ENCODE measurements at regions of chr2 and their contacts with region 1.

Region 1: GRCh38 chr2:143110758-143111428 is 18.3 kb upstream of the ARHGAP15 start:
- DNase-seq: peak; percentile 76
- H3K4me3 Mint-ChIP-seq: no peak overlapping the region
- H3K27ac Mint-ChIP-seq: peak overlapping the region; percentile 44
- H3K4me1 Mint-ChIP-seq: peaks cover 44% of the 10 kb centered on the region
- H3K27me3 Mint-ChIP-seq: no peaks in the 10 kb centered on the region

Region 2: GRCh38 chr2:143026411-143027054 is 84.4 kb before region 1 on chr2:
- CTCF ChIA-PET with region 1: no interaction called
- DNase-seq: no peak
- H3K4me3 Mint-ChIP-seq: no peak overlapping the region
- H3K27ac Mint-ChIP-seq: no peak overlapping the region
- H3K4me1 Mint-ChIP-seq: peaks cover 9% of the 10 kb centered on the region
- H3K27me3 Mint-ChIP-seq: peaks cover 17% of the 10 kb centered on the region

Region 3: DNA sequence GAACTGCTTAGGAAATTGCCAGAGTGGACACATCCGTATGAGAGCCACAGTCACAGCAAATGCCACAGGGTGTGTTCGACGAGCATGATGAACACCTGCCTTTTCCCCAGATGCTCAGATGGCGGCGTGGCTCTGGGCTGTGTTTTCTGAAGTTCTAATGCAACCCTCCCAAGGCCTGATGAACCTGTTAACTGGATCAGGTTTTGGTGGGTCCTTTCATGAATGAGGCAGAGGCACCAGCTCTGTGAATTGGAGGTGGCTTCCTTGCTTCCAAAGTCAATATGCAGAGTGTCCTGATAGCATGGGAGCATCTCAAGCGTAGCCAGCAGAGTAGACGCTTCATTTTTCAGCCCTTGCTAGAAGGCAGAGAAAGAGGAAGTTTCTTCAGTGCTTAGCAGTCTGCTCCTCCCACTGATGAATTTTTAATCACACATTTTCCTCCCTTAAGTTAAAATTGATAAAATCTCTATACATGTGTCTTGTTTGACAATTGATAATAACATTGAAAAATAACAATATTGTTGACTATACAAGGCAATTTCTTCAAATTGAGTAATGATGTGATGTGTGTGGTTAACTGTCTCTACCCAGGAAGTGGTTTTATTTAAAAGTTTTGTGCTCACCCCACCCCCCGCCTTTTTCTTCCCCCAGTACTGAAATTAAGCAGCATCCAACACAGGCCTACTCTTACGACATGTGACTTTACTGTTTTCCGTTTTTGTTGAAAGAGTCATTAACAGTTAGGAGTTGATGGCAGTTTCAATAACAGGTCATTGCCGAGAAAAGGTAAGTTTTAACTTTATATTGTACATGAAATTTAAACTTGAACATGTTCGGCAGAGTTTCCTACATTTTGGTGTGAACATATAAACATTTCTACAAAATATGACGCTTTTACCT is 18.0 kb after region 1 on chr2 and contains the start of gene ARHGAP15:
- CTCF ChIA-PET with region 1: interaction called, 25 read pairs
- DNase-seq: peak; percentile 84
- H3K4me3 Mint-ChIP-seq: peak within 1 kb of the TSS; percentile 74
- H3K27ac Mint-ChIP-seq: peak within 1 kb of the TSS; percentile 100
- H3K4me1 Mint-ChIP-seq: peaks cover 44% of the 10 kb centered on the region
- H3K27me3 Mint-ChIP-seq: no peaks in the 10 kb centered on the region

Region 4: GRCh38 chr2:143162123-143162837 is 51.4 kb after region 1 on chr2:
- CTCF ChIA-PET with region 1: interaction called, 39 read pairs
- DNase-seq: peak; percentile 70
- H3K4me3 Mint-ChIP-seq: no peak overlapping the region
- H3K27ac Mint-ChIP-seq: peak overlapping the region; percentile 8
- H3K4me1 Mint-ChIP-seq: peaks cover 75% of the 10 kb centered on the region
- H3K27me3 Mint-ChIP-seq: no peaks in the 10 kb centered on the region

Region 5: GRCh38 chr2:143410082-143410940 is 299.4 kb after region 1 on chr2:
- CTCF ChIA-PET with region 1: no interaction called
- DNase-seq: no peak
- H3K4me3 Mint-ChIP-seq: no peak overlapping the region
- H3K27ac Mint-ChIP-seq: no peak overlapping the region
- H3K4me1 Mint-ChIP-seq: no peaks in the 10 kb centered on the region
- H3K27me3 Mint-ChIP-seq: no peaks in the 10 kb centered on the region

Measured in activated naive CD4-positive, alpha-beta T cell treated with anti-CD3 and anti-CD28 coated beads, Interleukin-2, amount 10 ng/mL, durations not matched to agents 7 days and 5 days (primary cell).